ENCODE measurements at regions of chr1 and their contacts with region 1.

Region 1: DNA sequence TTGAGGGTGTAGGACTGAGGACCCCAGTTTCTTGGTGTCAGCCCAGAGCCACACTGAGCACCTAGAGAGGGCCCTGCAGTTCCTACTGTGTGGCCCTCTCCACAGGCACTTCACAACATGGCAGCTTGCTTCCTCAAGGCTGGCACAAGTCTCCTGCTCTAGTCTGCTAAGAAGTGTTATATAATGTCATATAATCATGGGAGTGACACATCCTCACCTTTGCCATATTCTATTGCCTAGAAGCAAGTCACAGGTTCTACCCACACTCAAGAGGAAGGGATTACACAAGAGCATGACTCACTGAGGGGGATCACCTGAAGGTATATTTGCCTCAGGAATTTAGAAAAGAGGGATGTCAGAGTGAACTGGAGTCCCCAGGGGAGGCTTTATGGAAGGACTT is 5.5 kb upstream of the SNX27 start:
- DNase-seq: no peak
- ATAC-seq: no peak
- H3K4me3 ChIP-seq: no peak overlapping the region
- H3K27ac ChIP-seq: no peak overlapping the region
- H3K4me1 ChIP-seq: no peaks in the 10 kb centered on the region
- H3K27me3 ChIP-seq: no peaks in the 10 kb centered on the region
- CTCF ChIP-seq: no peak
- EP300 ChIP-seq: no peak
- POLR2A ChIP-seq: no peak
- RAD21 ChIP-seq: no peak

Region 2: GRCh38 chr1:151502923-151503780 is 103.2 kb before region 1 on chr1:
- CTCF ChIA-PET with region 1: no interaction called
- POLR2A ChIA-PET with region 1: no interaction called
- RAD21 ChIA-PET with region 1: no interaction called
- SMC1A ChIA-PET with region 1: no interaction called
- in situ Hi-C with region 1: no loop called
- intact Hi-C with region 1: no loop called
- DNase-seq: no peak
- ATAC-seq: peak; percentile 72
- H3K4me3 ChIP-seq: no peak overlapping the region
- H3K27ac ChIP-seq: no peak overlapping the region
- H3K4me1 ChIP-seq: no peaks in the 10 kb centered on the region
- H3K27me3 ChIP-seq: no peaks in the 10 kb centered on the region; a peak in 1 of 4 replicates
- CTCF ChIP-seq: no peak
- EP300 ChIP-seq: no peak
- POLR2A ChIP-seq: no peak
- RAD21 ChIP-seq: no peak

Region 3: DNA sequence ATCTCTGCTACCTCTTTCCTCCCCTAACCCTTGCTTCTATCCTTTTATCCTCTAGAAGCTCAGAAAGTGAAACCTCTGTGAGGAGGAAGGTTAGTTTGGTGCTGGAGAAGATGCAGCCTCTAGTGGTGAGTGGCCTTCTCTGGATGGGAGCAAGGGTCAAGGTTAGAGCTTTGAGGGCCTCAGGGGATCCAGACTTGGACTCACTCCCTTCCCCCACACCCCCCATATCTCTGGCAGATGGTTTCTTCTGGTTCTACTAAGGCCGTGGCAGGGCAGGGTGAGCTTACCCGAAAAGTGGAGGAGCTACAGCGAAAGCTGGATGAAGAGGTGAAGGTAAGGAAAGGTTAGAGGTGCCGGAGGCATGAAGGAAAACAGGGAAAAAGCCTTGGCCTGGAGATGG is 86.0 kb before region 1 on chr1:
- CTCF ChIA-PET with region 1: no interaction called
- POLR2A ChIA-PET with region 1: no interaction called
- RAD21 ChIA-PET with region 1: no interaction called
- SMC1A ChIA-PET with region 1: no interaction called
- in situ Hi-C with region 1: no loop called
- intact Hi-C with region 1: no loop called
- DNase-seq: no peak
- ATAC-seq: peak; percentile 49; the same call in 2 of the 3 replicates
- H3K4me3 ChIP-seq: no peak overlapping the region
- H3K27ac ChIP-seq: no peak overlapping the region
- H3K4me1 ChIP-seq: no peaks in the 10 kb centered on the region
- H3K27me3 ChIP-seq: no peaks in the 10 kb centered on the region; a peak in 1 of 4 replicates
- CTCF ChIP-seq: peak in 2 of 3 experiments; percentile 31 to 40; a peak in 4 of 6 replicates
- EP300 ChIP-seq: no peak
- POLR2A ChIP-seq: no peak
- RAD21 ChIP-seq: peak; percentile 52

Region 4: GRCh38 chr1:151594143-151594625 is 12.2 kb before region 1 on chr1:
- CTCF ChIA-PET with region 1: interaction called, 21 read pairs
- POLR2A ChIA-PET with region 1: interaction called, 5 read pairs
- RAD21 ChIA-PET with region 1: interaction called, 3 read pairs
- SMC1A ChIA-PET with region 1: interaction called, 6 read pairs
- in situ Hi-C with region 1: no loop called
- intact Hi-C with region 1: no loop called
- DNase-seq: no peak
- ATAC-seq: peak; percentile 99
- H3K4me3 ChIP-seq: no peak overlapping the region
- H3K27ac ChIP-seq: no peak overlapping the region
- H3K4me1 ChIP-seq: no peaks in the 10 kb centered on the region
- H3K27me3 ChIP-seq: no peaks in the 10 kb centered on the region; a peak in 1 of 4 replicates
- CTCF ChIP-seq: peak; percentile 95 to 97 (median 95)
- EP300 ChIP-seq: no peak
- POLR2A ChIP-seq: no peak
- RAD21 ChIP-seq: peak; percentile 81

Region 5: GRCh38 chr1:151741516-151741915 is 135.1 kb after region 1 on chr1:
- CTCF ChIA-PET with region 1: no interaction called
- POLR2A ChIA-PET with region 1: no interaction called
- RAD21 ChIA-PET with region 1: no interaction called
- SMC1A ChIA-PET with region 1: no interaction called
- in situ Hi-C with region 1: no loop called
- intact Hi-C with region 1: no loop called
- DNase-seq: no peak
- ATAC-seq: no peak
- H3K4me3 ChIP-seq: no peak overlapping the region
- H3K27ac ChIP-seq: no peak overlapping the region
- H3K4me1 ChIP-seq: no peaks in the 10 kb centered on the region
- H3K27me3 ChIP-seq: no peaks in the 10 kb centered on the region; a peak in 1 of 4 replicates
- CTCF ChIP-seq: no peak
- EP300 ChIP-seq: no peak
- POLR2A ChIP-seq: no peak
- RAD21 ChIP-seq: no peak